K562 (cell line): ENCODE measurements at regions of chr17 and their contacts with region 1.

Region 1: GRCh38 chr17:16363749-16364536 is 10.7 kb upstream of the CENPV start:
- DNase-seq: peak; percentile 63 to 78 (median 67)
- ATAC-seq: peak; percentile 98
- H3K4me3 ChIP-seq: no peak overlapping the region
- H3K27ac ChIP-seq: no peak overlapping the region
- H3K4me1 ChIP-seq: no peaks in the 10 kb centered on the region; a peak in 1 of 5 replicates
- H3K27me3 ChIP-seq: no peaks in the 10 kb centered on the region
- CTCF ChIP-seq: peak; percentile 77 to 88 (median 82)
- EP300 ChIP-seq: no peak
- POLR2A ChIP-seq: no peak
- RAD21 ChIP-seq: peak; percentile 62 to 80

Region 2: DNA sequence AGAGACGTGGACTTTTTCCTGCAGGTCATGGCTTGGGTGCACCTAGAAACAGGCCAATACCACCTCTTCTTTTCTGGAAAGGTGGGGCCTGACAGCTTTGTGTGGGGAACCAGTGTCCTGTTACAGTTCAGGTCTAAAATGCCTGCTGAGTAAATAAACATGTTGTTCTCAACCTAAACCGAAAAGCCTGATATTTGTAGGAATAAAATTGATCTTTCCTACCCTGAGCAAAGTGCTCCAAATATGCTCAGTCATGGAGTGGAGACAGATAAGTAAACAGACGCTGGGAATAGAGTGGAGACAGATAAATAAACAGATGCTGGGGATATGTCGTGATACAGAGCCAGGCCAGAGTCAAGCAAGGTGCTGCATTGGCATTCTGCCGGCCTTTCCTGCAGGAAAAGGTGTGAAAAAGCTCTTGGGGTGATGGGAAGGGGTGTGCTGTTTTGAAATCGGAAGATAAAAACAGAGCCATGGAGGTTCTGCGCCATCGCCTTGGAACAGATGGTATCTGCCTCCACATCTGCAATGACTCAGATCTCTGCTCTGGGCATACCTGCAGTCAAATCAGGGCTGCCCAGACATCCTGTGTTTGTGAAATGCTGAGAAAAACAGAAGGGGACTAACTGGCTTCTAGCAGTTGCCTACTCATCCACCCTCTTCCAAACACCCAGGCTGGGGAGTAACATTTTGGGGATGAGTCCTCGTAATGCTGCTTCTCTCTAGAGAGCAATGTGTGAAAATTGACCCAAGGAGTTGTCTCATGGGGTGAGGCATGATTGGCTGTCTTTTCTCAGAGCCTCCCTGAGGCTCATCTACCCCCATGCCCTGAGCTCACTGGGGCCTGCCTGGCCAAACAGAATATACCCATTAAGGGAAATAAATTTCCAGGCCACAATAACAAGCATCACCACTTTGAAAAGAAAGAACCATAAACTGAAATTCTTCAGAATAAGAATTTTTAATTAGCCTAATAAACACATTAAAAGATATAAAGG is 34.6 kb after region 1 on chr17:
- CTCF ChIA-PET with region 1: no interaction called
- POLR2A ChIA-PET with region 1: no interaction called
- in situ Hi-C with region 1: no loop called
- intact Hi-C with region 1: no loop called
- DNase-seq: peak; percentile 52 to 83 (median 54)
- ATAC-seq: peak; percentile 75
- H3K4me3 ChIP-seq: no peak overlapping the region
- H3K27ac ChIP-seq: peak overlapping the region; percentile 64
- H3K4me1 ChIP-seq: peaks cover 2 to 21% of the 10 kb centered on the region in 2 experiments; a peak in 4 of 5 replicates
- H3K27me3 ChIP-seq: no peaks in the 10 kb centered on the region
- CTCF ChIP-seq: no peak
- EP300 ChIP-seq: peak; percentile 80
- POLR2A ChIP-seq: no peak
- RAD21 ChIP-seq: no peak

Region 3: GRCh38 chr17:16415031-16415924 is 51.3 kb after region 1 on chr17 and contains the start of gene TRPV2:
- CTCF ChIA-PET with region 1: interaction called, 3 read pairs
- POLR2A ChIA-PET with region 1: no interaction called
- in situ Hi-C with region 1: no loop called
- intact Hi-C with region 1: loop called (anchors 2 kb)
- DNase-seq: peak; percentile 69 to 76 (median 73)
- ATAC-seq: peak; percentile 83
- H3K4me3 ChIP-seq: peak within 1 kb of the TSS; percentile 80
- H3K27ac ChIP-seq: peak within 1 kb of the TSS; percentile 88
- H3K4me1 ChIP-seq: peaks cover 37 to 39% of the 10 kb centered on the region in 2 experiments
- H3K27me3 ChIP-seq: no peaks in the 10 kb centered on the region
- CTCF ChIP-seq: peak; percentile 78 to 88 (median 83)
- EP300 ChIP-seq: no peak
- POLR2A ChIP-seq: peak; percentile 82
- RAD21 ChIP-seq: peak; percentile 61 to 70; a peak in 3 of 4 replicates
- polyA plus RNA-seq, gene TRPV2: 10.0 to 15.6 TPM

Region 4: DNA sequence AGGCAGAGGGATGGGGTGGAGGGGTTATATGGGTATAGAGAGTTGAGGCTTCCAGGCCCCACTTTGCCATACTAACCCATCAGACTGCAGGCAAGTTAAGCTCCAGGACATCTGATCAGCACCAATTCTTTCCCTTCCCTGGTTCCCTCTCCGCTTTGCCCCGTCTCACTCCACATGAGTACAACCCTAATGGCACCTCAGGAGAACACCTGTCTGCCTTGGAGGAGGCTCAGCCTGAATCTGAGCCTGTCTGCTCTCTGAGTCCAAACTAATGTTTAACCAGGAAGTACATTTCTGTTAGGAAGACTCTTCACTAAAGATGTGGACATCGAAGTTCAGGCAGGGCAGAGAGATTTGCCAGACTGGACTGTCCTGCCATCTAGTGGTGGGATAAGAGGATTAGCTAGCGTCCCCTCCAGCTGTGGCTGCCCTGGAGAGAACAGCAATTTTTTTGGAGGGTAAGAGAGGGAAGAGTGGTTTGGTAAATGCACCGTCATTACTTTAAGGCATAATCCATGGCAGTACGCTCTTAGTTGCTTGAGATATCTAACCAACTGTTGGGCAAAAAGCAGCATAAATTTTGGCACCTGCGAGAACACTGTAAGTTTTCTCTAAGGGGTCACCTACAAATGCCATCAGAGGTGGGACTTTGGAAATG is 157.3 kb after region 1 on chr17:
- CTCF ChIA-PET with region 1: no interaction called
- POLR2A ChIA-PET with region 1: no interaction called
- in situ Hi-C with region 1: no loop called
- intact Hi-C with region 1: loop called (anchors 2 kb)
- DNase-seq: peak; percentile 72 to 82 (median 76)
- ATAC-seq: peak; percentile 98
- H3K4me3 ChIP-seq: no peak overlapping the region
- H3K27ac ChIP-seq: no peak overlapping the region
- H3K4me1 ChIP-seq: peaks cover 0 to 6% of the 10 kb centered on the region in 2 experiments; a peak in 3 of 5 replicates
- H3K27me3 ChIP-seq: no peaks in the 10 kb centered on the region
- CTCF ChIP-seq: peak; percentile 83 to 87 (median 84)
- EP300 ChIP-seq: no peak
- POLR2A ChIP-seq: no peak
- RAD21 ChIP-seq: peak; percentile 86 to 91